ENCODE measurements at regions of chr9 and their contacts with region 1.

Region 1: DNA sequence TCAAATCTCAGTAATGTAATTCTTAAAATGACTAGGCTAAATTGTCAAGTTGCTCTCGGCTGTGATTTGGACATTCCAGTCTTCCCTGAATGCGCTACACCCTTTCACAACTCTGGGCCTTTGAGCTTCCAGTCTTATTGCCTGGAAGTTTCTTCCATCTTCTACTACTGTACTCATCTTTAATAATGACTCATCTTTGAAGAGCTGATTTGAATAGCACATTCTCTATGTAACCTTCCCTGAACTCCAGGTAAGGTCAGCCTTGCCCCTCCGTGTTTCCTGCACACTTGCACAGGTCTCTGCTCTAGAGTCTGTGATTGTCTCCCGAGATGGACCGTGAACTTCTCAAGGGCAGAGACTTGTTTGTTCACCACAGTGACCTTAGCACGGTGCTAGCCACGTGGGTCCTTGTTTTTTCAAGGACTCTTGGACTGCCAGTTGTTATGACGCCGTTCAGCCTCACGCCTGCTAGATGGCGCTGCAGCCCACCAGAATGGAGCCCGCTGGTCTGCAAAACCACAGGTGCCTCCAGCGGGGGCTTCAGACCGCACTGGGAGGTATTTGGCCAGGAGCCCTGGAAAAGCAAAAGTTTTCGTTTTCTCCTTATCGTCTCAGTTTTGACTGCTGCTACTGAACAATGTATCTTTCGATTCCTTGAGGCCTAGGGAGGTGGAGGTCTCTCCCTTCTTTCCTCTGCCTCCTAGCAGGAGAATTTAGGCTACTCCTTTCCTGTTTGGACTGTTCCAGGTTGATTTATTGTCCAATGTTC is 44.4 kb downstream of the SEC61B start:
- DNase-seq: peak; percentile 71
- ATAC-seq: peak; percentile 74
- H3K4me3 Mint-ChIP-seq: peak overlapping the region; percentile 67
- H3K27ac Mint-ChIP-seq: peak overlapping the region; percentile 85
- H3K4me1 Mint-ChIP-seq: peaks cover 49% of the 10 kb centered on the region
- H3K27me3 Mint-ChIP-seq: no peaks in the 10 kb centered on the region
- CTCF ChIP-seq: no peak

Region 2: GRCh38 chr9:98570663-98571440 is 695.6 kb before region 1 on chr9:
- CTCF ChIA-PET with region 1: no interaction called
- POLR2A ChIA-PET with region 1: no interaction called
- intact Hi-C with region 1: no loop called
- DNase-seq: no peak
- ATAC-seq: no peak
- H3K4me3 Mint-ChIP-seq: no peak overlapping the region
- H3K27ac Mint-ChIP-seq: no peak overlapping the region
- H3K4me1 Mint-ChIP-seq: peaks cover 7% of the 10 kb centered on the region
- H3K27me3 Mint-ChIP-seq: peaks cover 18% of the 10 kb centered on the region
- CTCF ChIP-seq: no peak

Region 3: DNA sequence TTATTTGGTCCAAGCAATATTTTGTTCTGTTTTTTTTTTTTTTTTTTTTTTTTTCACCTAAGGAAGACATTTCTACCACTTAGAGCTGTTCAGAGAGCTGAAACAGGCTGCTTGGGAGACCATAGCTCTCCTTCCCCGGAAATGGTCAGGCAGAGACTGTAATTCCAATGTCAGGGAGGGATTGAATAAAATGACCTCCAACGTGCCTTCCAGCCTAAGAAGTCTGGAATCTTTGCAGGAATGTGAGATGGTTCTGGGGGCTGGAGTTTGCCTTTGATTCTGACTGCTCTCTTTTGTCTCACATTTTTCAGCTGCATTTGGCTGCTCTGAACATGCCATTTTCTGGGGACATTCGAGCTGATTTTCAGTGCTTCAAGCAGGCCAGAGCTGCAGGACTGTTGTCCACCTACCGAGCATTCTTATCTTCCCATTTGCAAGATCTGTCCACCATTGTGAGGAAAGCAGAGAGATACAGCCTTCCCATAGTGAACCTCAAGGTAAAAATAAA is 199.8 kb before region 1 on chr9:
- CTCF ChIA-PET with region 1: no interaction called
- POLR2A ChIA-PET with region 1: interaction called, 19 read pairs
- intact Hi-C with region 1: no loop called
- DNase-seq: no peak
- ATAC-seq: no peak
- H3K4me3 Mint-ChIP-seq: no peak overlapping the region
- H3K27ac Mint-ChIP-seq: no peak overlapping the region
- H3K4me1 Mint-ChIP-seq: peaks cover 8% of the 10 kb centered on the region
- H3K27me3 Mint-ChIP-seq: no peaks in the 10 kb centered on the region
- CTCF ChIP-seq: no peak

Region 4: DNA sequence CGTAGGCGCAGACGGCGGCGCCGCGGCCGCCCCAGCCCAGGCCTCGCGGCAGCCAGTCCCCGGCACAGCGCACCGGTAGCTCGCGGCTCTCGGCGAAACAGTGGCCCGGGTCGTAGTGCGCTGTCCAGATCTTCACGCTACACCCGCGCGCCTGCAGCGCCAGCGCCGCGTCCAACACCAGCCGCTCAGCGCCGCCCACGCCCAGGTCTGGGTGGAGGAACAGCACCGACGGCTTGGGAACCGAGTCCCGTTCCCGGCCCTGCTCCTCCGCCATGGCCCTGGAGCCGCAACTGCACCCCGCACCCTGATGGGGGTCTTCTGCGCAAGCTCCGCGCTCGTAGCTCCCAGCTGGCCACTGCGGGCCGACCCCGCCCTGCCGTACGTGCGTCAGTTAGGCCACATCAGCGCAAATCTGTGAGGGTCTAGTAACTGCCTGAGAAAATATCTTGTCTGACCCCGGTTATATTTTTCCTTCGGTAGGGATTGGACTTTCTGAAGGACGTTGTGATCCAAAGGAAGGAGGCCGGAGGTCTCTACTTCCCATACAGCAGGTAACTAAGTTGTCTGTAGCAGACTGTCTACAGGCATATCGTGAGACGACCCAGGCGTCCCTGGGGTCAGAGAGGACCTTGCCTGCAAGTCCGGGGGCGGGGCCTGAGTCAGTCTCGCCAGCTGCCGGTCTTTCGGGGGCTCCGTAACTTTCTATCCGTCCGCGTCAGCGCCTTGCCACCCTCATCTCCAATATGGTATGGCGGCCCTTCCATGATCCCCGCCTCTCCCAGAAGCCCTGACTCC is 44.6 kb before region 1 on chr9 and contains the starts of genes ALG2 and SEC61B:
- CTCF ChIA-PET with region 1: interaction called, 9 read pairs
- POLR2A ChIA-PET with region 1: interaction called, 19 read pairs
- intact Hi-C with region 1: no loop called
- DNase-seq: peak; percentile 84
- ATAC-seq: peak; percentile 89
- H3K4me3 Mint-ChIP-seq: peak within 1 kb of the TSS; percentile 97
- H3K27ac Mint-ChIP-seq: peak within 1 kb of the TSS; percentile 100
- H3K4me1 Mint-ChIP-seq: peaks cover 72% of the 10 kb centered on the region
- H3K27me3 Mint-ChIP-seq: no peaks in the 10 kb centered on the region
- CTCF ChIP-seq: no peak
- total RNA-seq, gene ALG2: 51.9 and 54.4 TPM in 2 replicates
- total RNA-seq, gene SEC61B: 200 and 243 TPM in 2 replicates

Region 5: DNA sequence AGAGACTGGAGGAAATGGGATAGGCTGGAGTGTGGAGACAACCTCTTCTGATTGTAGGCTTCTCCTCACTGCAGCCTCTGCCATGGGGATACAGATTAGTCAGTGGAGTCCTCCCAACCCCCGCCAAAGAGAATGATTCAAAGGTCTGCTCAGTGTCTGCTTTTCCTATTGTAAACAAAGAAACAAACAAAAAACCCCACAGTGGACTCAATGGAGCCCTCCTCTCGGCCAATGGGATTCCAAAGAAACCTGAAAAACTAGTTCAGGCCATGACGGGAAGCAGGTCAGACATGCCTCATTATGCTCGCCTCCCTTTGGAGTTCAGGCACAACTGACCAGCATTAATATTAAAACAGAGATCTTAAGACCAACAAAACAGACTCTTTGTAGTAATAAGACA is 41.4 kb after region 1 on chr9:
- CTCF ChIA-PET with region 1: no interaction called
- POLR2A ChIA-PET with region 1: no interaction called
- intact Hi-C with region 1: no loop called
- DNase-seq: no peak
- ATAC-seq: no peak
- H3K4me3 Mint-ChIP-seq: no peak overlapping the region
- H3K27ac Mint-ChIP-seq: no peak overlapping the region
- H3K4me1 Mint-ChIP-seq: no peaks in the 10 kb centered on the region
- H3K27me3 Mint-ChIP-seq: no peaks in the 10 kb centered on the region
- CTCF ChIP-seq: no peak

Region 6: DNA sequence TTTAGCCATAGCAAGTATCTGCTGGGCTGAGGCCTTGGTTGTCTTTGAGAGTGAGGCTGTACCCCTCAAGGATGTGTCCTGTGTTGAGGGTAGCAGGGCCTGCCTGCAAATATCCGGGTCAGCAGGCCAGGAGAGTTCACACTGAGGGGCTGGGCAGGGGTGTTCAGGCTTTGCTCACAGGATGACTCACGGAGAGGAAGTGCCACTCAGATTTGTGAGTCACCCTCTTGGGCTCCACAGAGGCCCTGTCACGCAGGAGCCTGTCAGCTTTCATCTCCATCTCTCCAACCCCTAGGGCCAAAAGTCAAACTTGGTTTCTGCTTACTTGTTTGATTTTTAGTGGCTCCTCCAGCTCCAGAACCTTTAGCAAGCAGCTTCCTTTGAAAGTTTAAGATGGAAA is 167.1 kb after region 1 on chr9:
- CTCF ChIA-PET with region 1: no interaction called
- POLR2A ChIA-PET with region 1: no interaction called
- intact Hi-C with region 1: loop called (anchors 5 kb)
- DNase-seq: peak; percentile 47
- ATAC-seq: peak; percentile 99
- H3K4me3 Mint-ChIP-seq: peak overlapping the region; percentile 4
- H3K27ac Mint-ChIP-seq: peak overlapping the region; percentile 78
- H3K4me1 Mint-ChIP-seq: peaks cover 18% of the 10 kb centered on the region
- H3K27me3 Mint-ChIP-seq: no peaks in the 10 kb centered on the region
- CTCF ChIP-seq: no peak

Region 7: GRCh38 chr9:99595796-99596195 is 329.4 kb after region 1 on chr9:
- CTCF ChIA-PET with region 1: interaction called, 3 read pairs
- POLR2A ChIA-PET with region 1: no interaction called
- intact Hi-C with region 1: loop called (anchors 1 kb)
- DNase-seq: no peak
- ATAC-seq: peak; percentile 78
- H3K4me3 Mint-ChIP-seq: peak overlapping the region; percentile 21
- H3K27ac Mint-ChIP-seq: peak overlapping the region; percentile 85
- H3K4me1 Mint-ChIP-seq: peaks cover 54% of the 10 kb centered on the region
- H3K27me3 Mint-ChIP-seq: no peaks in the 10 kb centered on the region
- CTCF ChIP-seq: no peak

Region 8: GRCh38 chr9:99828417-99829176 is 562.2 kb after region 1 on chr9:
- CTCF ChIA-PET with region 1: interaction called, 10 read pairs
- POLR2A ChIA-PET with region 1: interaction called, 3 read pairs
- intact Hi-C with region 1: loop called (anchors 1 kb)
- DNase-seq: no peak
- ATAC-seq: no peak
- H3K4me3 Mint-ChIP-seq: peak overlapping the region; percentile 7
- H3K27ac Mint-ChIP-seq: no peak overlapping the region
- H3K4me1 Mint-ChIP-seq: peaks cover 46% of the 10 kb centered on the region
- H3K27me3 Mint-ChIP-seq: peaks cover 35% of the 10 kb centered on the region
- CTCF ChIP-seq: no peak

Region 9: GRCh38 chr9:100216178-100216787 is 949.8 kb after region 1 on chr9:
- CTCF ChIA-PET with region 1: interaction called, 3 read pairs
- POLR2A ChIA-PET with region 1: no interaction called
- intact Hi-C with region 1: loop called (anchors 2 kb)
- DNase-seq: peak; percentile 37
- ATAC-seq: peak; percentile 87
- H3K4me3 Mint-ChIP-seq: no peak overlapping the region
- H3K27ac Mint-ChIP-seq: no peak overlapping the region
- H3K4me1 Mint-ChIP-seq: no peaks in the 10 kb centered on the region
- H3K27me3 Mint-ChIP-seq: no peaks in the 10 kb centered on the region
- CTCF ChIP-seq: no peak